Activated CD8-positive, alpha-beta T cell treated with anti-CD3 and anti-CD28 coated beads for 36 hours (primary cell): ENCODE measurements at regions of chr10 and their contacts with region 1.

Region 1: GRCh38 chr10:36681751-36682632 is 443.4 kb upstream of the ANKRD30A start:
- DNase-seq: no peak
- ATAC-seq: no peak
- H3K4me3 Mint-ChIP-seq: no peak overlapping the region
- H3K27ac Mint-ChIP-seq: no peak overlapping the region
- H3K4me1 Mint-ChIP-seq: no peaks in the 10 kb centered on the region
- H3K27me3 Mint-ChIP-seq: no peaks in the 10 kb centered on the region
- CTCF ChIP-seq: no peak

Region 2: DNA sequence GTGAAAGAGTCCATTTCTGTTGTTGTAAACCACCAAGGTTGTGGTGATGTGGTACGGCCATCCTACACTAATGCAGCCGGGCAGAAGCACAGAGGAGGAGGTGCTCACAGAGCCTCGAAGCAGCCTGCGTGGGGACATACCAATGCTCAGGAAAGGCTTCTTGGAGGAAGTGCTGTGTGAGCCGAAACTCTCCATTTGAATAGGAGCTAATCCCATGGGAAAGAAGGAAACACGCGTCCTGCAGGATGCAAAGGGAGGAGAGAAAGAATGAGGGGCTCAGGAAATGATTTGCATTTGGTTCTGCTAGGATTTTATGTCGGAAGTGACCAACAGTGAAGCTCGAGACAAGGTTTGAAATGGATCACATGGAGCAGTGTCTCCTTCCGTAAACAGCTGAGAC is 34.5 kb before region 1 on chr10:
- CTCF ChIA-PET with region 1: no interaction called
- POLR2A ChIA-PET with region 1: no interaction called
- intact Hi-C with region 1: loop called (anchors 2 kb)
- DNase-seq: no peak
- ATAC-seq: no peak
- H3K4me3 Mint-ChIP-seq: no peak overlapping the region
- H3K27ac Mint-ChIP-seq: no peak overlapping the region
- H3K4me1 Mint-ChIP-seq: no peaks in the 10 kb centered on the region
- H3K27me3 Mint-ChIP-seq: no peaks in the 10 kb centered on the region
- CTCF ChIP-seq: no peak